ENCODE measurements at regions of chr15 and their contacts with region 1.

Region 1: GRCh38 chr15:63805993-63806980 is 27.5 kb downstream of the HERC1 start:
- DNase-seq: peak; percentile 56
- ATAC-seq: peak; percentile 66
- H3K4me3 ChIP-seq: peak overlapping the region in 1 of 5 experiments; percentile 26
- H3K4me3 Mint-ChIP-seq: peak overlapping the region; percentile 35
- H3K27ac ChIP-seq: peak overlapping the region; percentile 62 to 74
- H3K27ac Mint-ChIP-seq: peak overlapping the region; percentile 71
- H3K4me1 ChIP-seq: peaks cover 48 to 62% of the 10 kb centered on the region in 2 donors
- H3K4me1 Mint-ChIP-seq: peaks cover 80% of the 10 kb centered on the region
- H3K27me3 ChIP-seq: no peaks in the 10 kb centered on the region
- H3K27me3 Mint-ChIP-seq: no peaks in the 10 kb centered on the region
- CTCF ChIP-seq: no peak

Region 2: DNA sequence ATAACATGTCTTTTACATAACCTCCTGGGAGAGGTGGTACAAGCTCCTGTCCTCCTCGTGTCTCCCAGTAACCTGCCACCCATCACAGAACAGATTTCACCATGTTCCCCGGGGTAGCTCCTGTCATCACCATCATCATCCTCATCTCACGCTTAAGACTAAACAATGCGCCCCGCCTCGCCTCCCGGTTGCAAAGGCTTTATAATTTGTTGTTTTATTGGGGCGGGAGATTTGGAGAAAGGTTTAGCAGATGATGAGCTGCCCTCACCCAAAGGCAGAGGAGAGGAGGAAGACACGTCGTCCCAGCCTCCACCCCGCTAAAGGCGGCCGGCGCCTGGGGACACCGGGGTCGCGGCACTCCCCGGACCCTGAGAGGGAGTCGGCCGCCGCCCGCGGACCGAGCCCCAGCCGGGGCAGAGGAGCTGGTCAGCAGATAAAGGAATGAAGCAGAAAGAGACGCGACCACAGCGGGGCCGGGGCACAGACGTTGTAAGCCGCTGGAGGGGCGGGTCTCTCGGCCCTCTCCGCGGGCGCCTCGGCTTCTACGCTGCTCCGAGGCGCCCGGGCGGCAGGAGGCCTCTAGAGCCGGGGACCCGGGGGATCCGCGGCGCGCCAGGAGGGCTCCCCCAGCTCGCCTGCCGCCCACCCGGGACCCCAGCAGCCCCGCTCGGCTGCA is 26.9 kb after region 1 on chr15:
- CTCF ChIA-PET with region 1: no interaction called
- POLR2A ChIA-PET with region 1: interaction called, 3 read pairs
- intact Hi-C with region 1: loop called (anchors 2 kb)
- DNase-seq: no peak
- ATAC-seq: peak; percentile 39
- H3K4me3 ChIP-seq: peak overlapping the region; percentile 83 to 95 (median 93)
- H3K4me3 Mint-ChIP-seq: peak overlapping the region; percentile 91
- H3K27ac ChIP-seq: peak overlapping the region; percentile 90
- H3K27ac Mint-ChIP-seq: peak overlapping the region; percentile 87
- H3K4me1 ChIP-seq: peaks cover 22 to 27% of the 10 kb centered on the region in 2 donors
- H3K4me1 Mint-ChIP-seq: peaks cover 39% of the 10 kb centered on the region
- H3K27me3 ChIP-seq: no peaks in the 10 kb centered on the region
- H3K27me3 Mint-ChIP-seq: no peaks in the 10 kb centered on the region
- CTCF ChIP-seq: no peak

Region 3: DNA sequence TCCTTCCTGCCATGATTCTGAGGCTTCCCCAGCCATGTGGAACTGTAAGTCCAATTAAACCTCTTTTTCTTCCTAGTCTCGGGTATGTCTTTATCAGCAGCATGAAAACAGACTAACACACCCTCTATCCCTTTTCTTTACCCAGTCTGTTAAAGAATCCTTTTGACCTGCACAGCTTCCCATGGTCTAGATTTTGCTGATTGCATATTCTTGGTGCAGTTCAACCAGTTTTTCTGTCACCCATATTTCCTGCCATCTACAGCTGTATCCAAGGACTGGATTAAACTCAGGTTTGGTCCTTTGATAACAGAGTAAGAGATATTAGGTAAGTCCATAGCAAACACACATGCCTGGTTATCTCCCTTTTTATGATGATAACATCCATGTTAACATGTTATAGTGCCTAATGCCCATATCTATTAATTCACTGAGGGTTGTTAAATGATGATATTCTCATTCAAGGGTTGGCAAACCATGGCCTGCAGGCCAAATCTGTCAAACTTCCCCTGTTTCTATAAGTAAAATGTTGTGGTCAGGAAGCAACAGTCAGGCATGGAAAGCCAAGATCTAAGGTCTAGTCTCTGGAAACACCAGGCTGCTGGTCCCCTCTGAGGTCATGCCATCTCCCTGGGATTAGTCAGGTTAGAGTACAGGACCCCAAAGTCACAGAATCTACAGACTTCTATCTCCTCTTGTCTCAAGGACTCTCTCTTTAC is 42.4 kb after region 1 on chr15:
- CTCF ChIA-PET with region 1: no interaction called
- POLR2A ChIA-PET with region 1: no interaction called
- intact Hi-C with region 1: loop called (anchors 5 kb)
- DNase-seq: no peak
- ATAC-seq: no peak
- H3K4me3 ChIP-seq: no peak overlapping the region
- H3K4me3 Mint-ChIP-seq: peak overlapping the region; percentile 23
- H3K27ac ChIP-seq: no peak overlapping the region
- H3K27ac Mint-ChIP-seq: no peak overlapping the region
- H3K4me1 ChIP-seq: peaks cover 10 to 16% of the 10 kb centered on the region in 2 donors
- H3K4me1 Mint-ChIP-seq: peaks cover 14% of the 10 kb centered on the region
- H3K27me3 ChIP-seq: no peaks in the 10 kb centered on the region
- H3K27me3 Mint-ChIP-seq: no peaks in the 10 kb centered on the region
- CTCF ChIP-seq: no peak

Region 4: DNA sequence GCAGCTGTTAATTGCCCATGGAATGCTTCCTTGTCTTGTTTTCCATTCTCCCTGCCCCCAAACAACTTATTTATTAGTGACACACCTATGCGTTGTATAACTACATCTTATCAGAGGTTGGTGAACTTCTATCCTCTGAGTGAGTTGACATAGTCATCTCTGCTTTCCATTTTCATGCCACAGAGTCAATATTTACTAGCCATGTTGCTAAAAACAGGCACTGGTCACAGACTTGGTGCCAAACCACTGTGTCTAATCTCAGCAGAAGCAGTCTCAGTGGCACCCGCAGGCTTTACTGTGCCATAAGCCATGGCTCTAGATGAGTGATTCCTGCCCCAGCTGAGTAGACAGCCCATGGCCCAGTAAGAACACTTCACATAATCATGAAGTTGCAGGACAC is 213.5 kb after region 1 on chr15:
- CTCF ChIA-PET with region 1: no interaction called
- POLR2A ChIA-PET with region 1: no interaction called
- intact Hi-C with region 1: no loop called
- DNase-seq: no peak
- ATAC-seq: no peak
- H3K4me3 ChIP-seq: no peak overlapping the region
- H3K4me3 Mint-ChIP-seq: no peak overlapping the region
- H3K27ac ChIP-seq: no peak overlapping the region
- H3K27ac Mint-ChIP-seq: no peak overlapping the region
- H3K4me1 ChIP-seq: no peaks in the 10 kb centered on the region
- H3K4me1 Mint-ChIP-seq: peaks cover 3% of the 10 kb centered on the region
- H3K27me3 ChIP-seq: no peaks in the 10 kb centered on the region
- H3K27me3 Mint-ChIP-seq: no peaks in the 10 kb centered on the region
- CTCF ChIP-seq: no peak

Region 5: GRCh38 chr15:65008983-65009382 is 1202.7 kb after region 1 on chr15:
- CTCF ChIA-PET with region 1: no interaction called
- POLR2A ChIA-PET with region 1: no interaction called
- intact Hi-C with region 1: no loop called
- DNase-seq: peak; percentile 32
- ATAC-seq: peak; percentile 62
- H3K4me3 ChIP-seq: no peak overlapping the region
- H3K4me3 Mint-ChIP-seq: no peak overlapping the region
- H3K27ac ChIP-seq: no peak overlapping the region
- H3K27ac Mint-ChIP-seq: no peak overlapping the region
- H3K4me1 ChIP-seq: no peaks in the 10 kb centered on the region
- H3K4me1 Mint-ChIP-seq: peaks cover 2% of the 10 kb centered on the region
- H3K27me3 ChIP-seq: no peaks in the 10 kb centered on the region
- H3K27me3 Mint-ChIP-seq: no peaks in the 10 kb centered on the region
- CTCF ChIP-seq: peak; percentile 12

Measured in B cell (primary cell).